ENCODE measurements at regions of chr7 and their contacts with region 1.

Region 1: DNA sequence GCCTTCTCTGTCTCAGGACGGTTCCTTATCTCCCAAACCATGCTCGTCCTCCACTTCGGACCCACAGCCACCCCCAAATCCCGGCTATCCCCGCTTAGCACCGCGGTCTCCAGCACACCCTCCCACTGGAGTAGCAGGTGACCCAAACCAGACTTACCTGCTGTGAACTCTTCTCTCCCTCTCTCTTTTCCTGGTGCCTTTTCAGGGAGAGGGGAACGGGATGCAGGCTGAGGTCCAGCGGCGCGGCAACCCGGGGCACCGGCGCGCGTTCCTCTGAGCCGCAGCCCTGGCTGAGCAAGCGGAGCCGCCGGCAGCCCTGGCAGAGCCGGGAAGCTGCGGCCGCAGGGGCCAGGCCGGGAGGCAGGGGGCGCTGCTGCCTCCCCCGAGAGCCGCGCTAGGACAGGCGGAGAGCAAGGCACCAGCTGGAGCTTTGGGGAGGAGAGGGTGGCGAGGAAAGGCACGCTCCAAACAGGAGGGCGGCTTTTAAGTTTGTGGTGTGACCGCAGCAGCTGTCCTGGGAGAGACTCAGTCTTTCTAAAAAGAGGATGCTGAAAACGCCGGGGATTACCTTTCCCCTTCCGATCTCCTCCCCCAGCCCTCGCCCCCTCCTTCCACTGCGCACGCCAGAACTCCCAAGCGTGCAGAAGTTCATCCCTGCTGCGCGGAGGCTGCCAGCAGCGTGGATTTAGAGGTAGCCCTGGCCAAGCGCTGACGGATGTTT is at the start of gene SEMA3D:
- DNase-seq: peak; percentile 61
- ATAC-seq: peak; percentile 91
- H3K4me3 Mint-ChIP-seq: peak within 1 kb of the TSS; percentile 83
- H3K27ac Mint-ChIP-seq: no peak within 1 kb of the TSS
- H3K4me1 Mint-ChIP-seq: peaks cover 21% of the 10 kb centered on the region
- H3K27me3 Mint-ChIP-seq: peaks cover 22% of the 10 kb centered on the region
- CTCF ChIP-seq: no peak
- total RNA-seq, gene SEMA3D: not detected in 2 replicates

Region 2: GRCh38 chr7:85041605-85042216 is 145.0 kb before region 1 on chr7:
- CTCF ChIA-PET with region 1: interaction called, 3 read pairs
- POLR2A ChIA-PET with region 1: no interaction called
- intact Hi-C with region 1: loop called (anchors 2 kb)
- DNase-seq: no peak
- ATAC-seq: peak; percentile 21
- H3K4me3 Mint-ChIP-seq: no peak overlapping the region
- H3K27ac Mint-ChIP-seq: no peak overlapping the region
- H3K4me1 Mint-ChIP-seq: no peaks in the 10 kb centered on the region
- H3K27me3 Mint-ChIP-seq: no peaks in the 10 kb centered on the region
- CTCF ChIP-seq: no peak

Region 3: DNA sequence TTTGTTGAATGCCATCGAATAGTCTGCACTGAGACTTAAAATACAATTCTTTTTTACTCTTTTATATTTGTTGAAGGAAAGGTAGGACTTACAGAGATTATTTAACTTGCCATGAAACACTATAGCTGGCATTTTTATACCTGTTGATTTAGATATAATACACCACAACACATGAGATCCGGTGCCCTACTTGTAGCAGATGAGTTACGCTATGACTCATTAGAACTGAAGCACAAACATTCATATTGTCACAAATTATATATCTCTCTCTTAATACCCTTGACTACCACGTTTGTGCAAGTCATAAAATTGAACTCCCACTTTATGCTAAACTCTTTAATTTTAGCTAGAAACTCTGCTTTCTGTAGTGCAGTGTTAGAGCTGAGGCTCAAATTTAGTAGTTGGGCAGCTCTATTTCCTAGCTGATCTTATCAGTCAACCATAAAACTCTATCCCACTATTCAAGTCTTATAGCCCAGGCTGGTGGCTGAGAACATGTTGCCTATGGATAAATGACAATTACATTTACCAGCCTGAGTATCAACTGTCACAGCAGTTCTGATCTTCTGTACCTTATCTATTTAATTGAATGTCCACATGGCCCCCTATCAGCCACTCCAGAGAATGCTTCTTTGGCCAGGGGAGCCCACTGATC is 137.6 kb after region 1 on chr7:
- CTCF ChIA-PET with region 1: no interaction called
- POLR2A ChIA-PET with region 1: no interaction called
- intact Hi-C with region 1: loop called (anchors 10 kb)
- DNase-seq: no peak
- ATAC-seq: no peak
- H3K4me3 Mint-ChIP-seq: no peak overlapping the region
- H3K27ac Mint-ChIP-seq: no peak overlapping the region
- H3K4me1 Mint-ChIP-seq: no peaks in the 10 kb centered on the region
- H3K27me3 Mint-ChIP-seq: no peaks in the 10 kb centered on the region
- CTCF ChIP-seq: no peak

Region 4: GRCh38 chr7:85381212-85381611 is 194.5 kb after region 1 on chr7:
- CTCF ChIA-PET with region 1: no interaction called
- POLR2A ChIA-PET with region 1: no interaction called
- intact Hi-C with region 1: no loop called
- DNase-seq: no peak
- ATAC-seq: no peak
- H3K4me3 Mint-ChIP-seq: no peak overlapping the region
- H3K27ac Mint-ChIP-seq: no peak overlapping the region
- H3K4me1 Mint-ChIP-seq: no peaks in the 10 kb centered on the region
- H3K27me3 Mint-ChIP-seq: no peaks in the 10 kb centered on the region
- CTCF ChIP-seq: no peak

Region 5: DNA sequence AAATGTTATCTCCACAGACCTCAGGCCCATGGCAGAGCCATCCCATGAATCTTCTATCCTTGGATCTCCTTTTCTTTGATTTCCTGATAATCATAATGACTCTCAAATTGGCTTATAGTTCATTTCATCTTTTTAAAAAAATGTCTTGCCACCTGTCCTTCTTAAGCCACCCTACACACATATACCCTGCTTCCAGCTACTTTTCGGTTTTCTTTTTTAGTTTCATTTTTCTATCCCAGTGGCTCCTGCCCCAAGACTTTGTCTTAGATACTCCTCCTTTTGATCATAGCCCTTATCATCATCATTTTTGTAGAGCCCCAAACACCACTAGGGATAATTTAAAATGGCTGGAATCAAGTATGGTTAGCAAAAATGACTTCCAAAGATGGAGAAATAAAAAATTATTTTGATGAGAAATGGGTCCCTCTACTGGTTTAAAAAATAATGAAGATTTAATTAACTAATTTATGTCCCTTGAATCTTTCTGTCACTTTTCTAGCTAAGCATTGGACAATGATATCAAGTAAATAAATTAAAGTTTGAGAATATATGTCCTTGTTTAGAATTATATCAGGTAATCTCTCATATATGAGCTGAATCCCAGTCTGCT is 277.5 kb after region 1 on chr7:
- CTCF ChIA-PET with region 1: interaction called, 18 read pairs
- POLR2A ChIA-PET with region 1: no interaction called
- intact Hi-C with region 1: loop called (anchors 1 kb)
- DNase-seq: no peak
- ATAC-seq: no peak
- H3K4me3 Mint-ChIP-seq: no peak overlapping the region
- H3K27ac Mint-ChIP-seq: no peak overlapping the region
- H3K4me1 Mint-ChIP-seq: no peaks in the 10 kb centered on the region
- H3K27me3 Mint-ChIP-seq: peaks cover 3% of the 10 kb centered on the region
- CTCF ChIP-seq: no peak